ENCODE measurements at regions of chr16 and their contacts with region 1.

Region 1: GRCh38 chr16:84166796-84167695 is 19.8 kb downstream of the TAF1C start:
- DNase-seq: no peak
- H3K4me3 ChIP-seq: no peak overlapping the region
- H3K27ac ChIP-seq: no peak overlapping the region
- H3K4me1 ChIP-seq: no peaks in the 10 kb centered on the region
- H3K27me3 ChIP-seq: peaks cover 46% of the 10 kb centered on the region
- CTCF ChIP-seq: no peak
- EP300 ChIP-seq: no peak
- RAD21 ChIP-seq: no peak

Region 2: GRCh38 chr16:84186685-84187437 is 19.8 kb after region 1 on chr16 and contains the start of gene TAF1C:
- CTCF ChIA-PET with region 1: interaction called, 15 read pairs
- POLR2A ChIA-PET with region 1: no interaction called
- DNase-seq: peak; percentile 99
- H3K4me3 ChIP-seq: peak within 1 kb of the TSS; percentile 96 to 100
- H3K27ac ChIP-seq: peak within 1 kb of the TSS; percentile 51 to 64; a peak in 3 of 4 replicates
- H3K4me1 ChIP-seq: peaks cover 0 to 11% of the 10 kb centered on the region in 2 experiments; a peak in 1 of 4 replicates
- H3K27me3 ChIP-seq: no peaks in the 10 kb centered on the region
- CTCF ChIP-seq: peak; percentile 91
- EP300 ChIP-seq: no peak; a peak in 1 of 4 replicates
- RAD21 ChIP-seq: peak; percentile 67
- polyA plus RNA-seq, gene TAF1C: 49.3 and 56.1 TPM in 2 replicates